Posterior cingulate gyrus (tissue), 11 donors: ENCODE measurements at regions of chr3 and their contacts with region 1.

Region 1: GRCh38 chr3:186044973-186045372 is 63.9 kb downstream of the ETV5 start:
- DNase-seq: peak in 8 of 10 donors; percentile 56 to 94 (median 66)

Region 2: DNA sequence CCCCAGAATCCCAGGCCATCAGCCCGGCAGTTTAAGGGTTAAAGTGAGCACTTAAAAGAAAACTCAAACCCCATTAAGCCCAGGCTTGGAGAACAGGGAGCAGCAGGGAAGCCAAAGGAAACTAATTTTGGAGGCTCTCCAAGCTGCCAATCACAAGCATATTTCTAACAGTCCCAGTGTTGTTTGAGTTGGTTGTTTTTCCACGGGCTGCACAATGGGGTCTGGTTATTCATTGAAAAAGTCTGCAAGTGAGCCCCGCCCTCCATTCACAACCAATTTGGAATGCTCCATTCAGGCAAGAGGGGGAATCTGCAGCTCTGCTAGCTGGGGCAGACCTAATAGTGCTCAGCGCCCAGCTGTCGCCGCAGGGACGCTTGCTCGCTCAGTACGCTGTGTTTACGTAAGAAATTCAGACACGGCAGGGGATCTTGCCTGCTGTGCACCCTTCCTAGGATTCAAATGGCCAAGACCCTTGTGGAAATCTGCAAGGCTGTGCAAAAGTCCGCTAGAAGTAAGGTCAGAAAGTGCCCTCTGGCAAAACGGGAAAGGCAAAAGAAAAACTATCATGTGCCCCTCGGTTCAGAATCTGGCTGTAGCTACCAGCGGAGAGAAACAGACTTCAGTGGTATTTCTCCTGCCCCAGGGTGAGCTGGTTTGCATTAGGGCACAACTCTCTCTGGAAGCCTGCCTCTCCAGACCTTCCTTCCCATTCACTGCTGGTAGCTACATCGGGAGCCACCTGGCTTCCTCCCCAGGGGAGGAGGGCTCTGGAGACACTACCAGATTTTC is 52.9 kb after region 1 on chr3:
- intact Hi-C with region 1: loop called (anchors 5 kb)
- DNase-seq: peak; percentile 66 to 96 (median 82)

Region 3: GRCh38 chr3:186209810-186210752 is 165.1 kb after region 1 on chr3:
- intact Hi-C with region 1: loop called (anchors 5 kb)
- DNase-seq: peak; percentile 73 to 98 (median 83)

Region 4: GRCh38 chr3:186719945-186720739 is 675.2 kb after region 1 on chr3:
- intact Hi-C with region 1: no loop called
- DNase-seq: no peak